Activated CD8-positive, alpha-beta T cell treated with anti-CD3 and anti-CD28 coated beads for 36 hours (primary cell): ENCODE measurements at regions of chr14 and their contacts with region 1.

Region 1: DNA sequence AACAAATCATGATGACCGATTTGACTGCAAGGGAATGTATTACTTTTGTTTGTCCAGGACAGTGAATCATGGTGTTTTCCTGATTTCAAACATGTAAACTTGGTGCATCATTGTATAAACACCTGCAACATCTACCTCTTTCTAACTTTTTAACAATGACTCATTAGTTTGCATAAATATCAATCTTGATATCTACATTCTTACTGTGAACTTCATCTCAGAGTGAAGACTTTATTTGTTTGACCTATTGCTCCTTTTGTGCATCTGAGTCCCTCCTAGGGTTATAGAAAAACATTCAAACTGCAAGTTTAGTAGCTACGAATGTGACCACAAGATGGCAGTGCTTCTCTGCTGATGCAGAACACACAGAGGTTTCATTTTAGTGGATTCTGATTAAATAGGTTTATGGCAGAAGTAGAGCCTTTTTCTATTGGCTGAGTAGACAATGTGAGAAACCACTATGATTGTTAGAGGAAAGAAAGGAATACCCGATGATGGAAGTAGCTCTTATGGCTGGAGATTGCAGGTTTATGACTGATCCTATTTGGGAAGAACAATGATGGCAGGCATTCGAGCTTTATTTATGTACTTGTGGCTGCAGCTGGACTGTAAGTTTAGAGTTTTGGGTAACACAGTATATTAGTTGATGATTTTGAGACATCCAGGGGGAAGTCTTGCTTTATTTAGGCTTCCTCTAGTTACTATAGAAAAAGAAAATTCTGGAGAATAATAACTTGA is 244.2 kb upstream of the OR4E1 start:
- DNase-seq: peak; percentile 81
- ATAC-seq: peak; percentile 58
- H3K4me3 Mint-ChIP-seq: peak overlapping the region; percentile 79
- H3K27ac Mint-ChIP-seq: peak overlapping the region; percentile 85
- H3K4me1 Mint-ChIP-seq: peaks cover 52% of the 10 kb centered on the region
- H3K27me3 Mint-ChIP-seq: no peaks in the 10 kb centered on the region
- CTCF ChIP-seq: peak; percentile 58

Region 2: GRCh38 chr14:21860172-21860571 is 57.7 kb before region 1 on chr14:
- CTCF ChIA-PET with region 1: interaction called, 11 read pairs
- POLR2A ChIA-PET with region 1: no interaction called
- intact Hi-C with region 1: no loop called
- DNase-seq: peak; percentile 65
- ATAC-seq: peak; percentile 35
- H3K4me3 Mint-ChIP-seq: peak overlapping the region; percentile 62
- H3K27ac Mint-ChIP-seq: peak overlapping the region; percentile 57
- H3K4me1 Mint-ChIP-seq: peaks cover 4% of the 10 kb centered on the region
- H3K27me3 Mint-ChIP-seq: peaks cover 5% of the 10 kb centered on the region
- CTCF ChIP-seq: peak; percentile 69

Region 3: GRCh38 chr14:21933681-21934080 is 15.8 kb after region 1 on chr14:
- CTCF ChIA-PET with region 1: interaction called, 39 read pairs
- POLR2A ChIA-PET with region 1: interaction called, 4 read pairs
- intact Hi-C with region 1: no loop called
- DNase-seq: no peak
- ATAC-seq: no peak
- H3K4me3 Mint-ChIP-seq: no peak overlapping the region
- H3K27ac Mint-ChIP-seq: no peak overlapping the region
- H3K4me1 Mint-ChIP-seq: peaks cover 9% of the 10 kb centered on the region
- H3K27me3 Mint-ChIP-seq: no peaks in the 10 kb centered on the region
- CTCF ChIP-seq: peak; percentile 26

Region 4: DNA sequence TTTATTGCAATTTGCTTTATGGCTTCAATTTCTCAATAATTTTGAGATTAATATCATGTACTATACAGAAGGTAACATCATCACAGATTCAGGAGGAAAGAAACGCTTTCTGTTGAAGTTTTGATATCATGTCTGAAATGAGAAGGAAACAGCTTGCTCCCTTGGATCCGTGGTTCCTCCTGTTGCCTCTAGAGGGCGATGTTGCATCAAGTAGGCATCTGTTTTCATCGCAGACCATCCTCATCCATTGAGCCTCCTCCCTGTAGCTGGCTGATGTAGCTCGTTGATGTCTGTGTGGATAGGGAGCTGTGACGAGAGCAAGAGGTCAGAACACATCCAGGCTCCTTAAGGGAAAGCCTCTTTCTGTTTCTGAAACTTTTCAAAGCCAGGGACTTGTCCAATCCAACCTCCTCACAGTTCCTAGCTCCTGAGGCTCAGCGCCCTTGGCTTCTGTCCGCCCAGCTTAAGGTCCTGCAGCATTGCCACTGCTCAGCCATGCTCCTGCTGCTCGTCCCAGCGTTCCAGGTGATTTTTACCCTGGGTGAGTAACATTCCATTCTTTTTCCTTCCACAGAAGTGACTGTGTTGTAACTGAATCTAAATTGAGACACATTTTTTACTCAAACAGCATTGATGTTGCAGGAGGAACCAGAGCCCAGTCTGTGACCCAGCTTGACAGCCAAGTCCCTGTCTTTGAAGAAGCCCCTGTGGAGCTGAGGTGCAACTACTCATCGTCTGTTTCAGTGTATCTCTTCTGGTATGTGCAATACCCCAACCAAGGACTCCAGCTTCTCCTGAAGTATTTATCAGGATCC is 60.5 kb after region 1 on chr14:
- CTCF ChIA-PET with region 1: interaction called, 33 read pairs
- POLR2A ChIA-PET with region 1: no interaction called
- intact Hi-C with region 1: loop called (anchors 5 kb)
- DNase-seq: peak; percentile 78
- ATAC-seq: peak; percentile 78
- H3K4me3 Mint-ChIP-seq: peak overlapping the region; percentile 78
- H3K27ac Mint-ChIP-seq: peak overlapping the region; percentile 63
- H3K4me1 Mint-ChIP-seq: peaks cover 21% of the 10 kb centered on the region
- H3K27me3 Mint-ChIP-seq: no peaks in the 10 kb centered on the region
- CTCF ChIP-seq: peak; percentile 67

Region 5: DNA sequence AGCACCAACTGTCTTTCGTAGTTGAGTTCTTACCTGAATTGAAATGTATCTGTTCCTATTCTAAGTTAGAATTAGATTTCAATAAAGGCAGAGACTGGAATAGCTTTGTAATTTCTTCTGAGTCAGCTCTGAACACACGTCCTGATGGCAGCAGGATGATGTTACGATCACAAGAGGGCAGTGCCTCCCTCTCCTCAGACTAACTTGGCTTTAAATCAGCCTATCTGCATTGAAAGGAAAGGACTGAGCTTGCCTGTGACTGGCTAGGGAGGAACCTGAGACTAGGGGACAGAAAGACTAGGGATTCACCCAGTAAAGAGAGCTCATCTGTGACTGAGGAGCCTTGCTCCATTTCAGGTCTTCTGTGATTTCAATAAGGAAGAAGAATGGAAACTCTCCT is 79.4 kb after region 1 on chr14:
- CTCF ChIA-PET with region 1: interaction called, 33 read pairs
- POLR2A ChIA-PET with region 1: no interaction called
- intact Hi-C with region 1: no loop called
- DNase-seq: peak; percentile 66
- ATAC-seq: peak; percentile 88
- H3K4me3 Mint-ChIP-seq: peak overlapping the region; percentile 95
- H3K27ac Mint-ChIP-seq: peak overlapping the region; percentile 96
- H3K4me1 Mint-ChIP-seq: peaks cover 20% of the 10 kb centered on the region
- H3K27me3 Mint-ChIP-seq: no peaks in the 10 kb centered on the region
- CTCF ChIP-seq: peak; percentile 33

Region 6: GRCh38 chr14:22099942-22100763 is 182.3 kb after region 1 on chr14:
- CTCF ChIA-PET with region 1: interaction called, 12 read pairs
- POLR2A ChIA-PET with region 1: no interaction called
- intact Hi-C with region 1: no loop called
- DNase-seq: peak; percentile 79
- ATAC-seq: peak; percentile 67
- H3K4me3 Mint-ChIP-seq: no peak overlapping the region
- H3K27ac Mint-ChIP-seq: peak overlapping the region; percentile 38
- H3K4me1 Mint-ChIP-seq: peaks cover 48% of the 10 kb centered on the region
- H3K27me3 Mint-ChIP-seq: no peaks in the 10 kb centered on the region
- CTCF ChIP-seq: peak; percentile 39

Region 7: DNA sequence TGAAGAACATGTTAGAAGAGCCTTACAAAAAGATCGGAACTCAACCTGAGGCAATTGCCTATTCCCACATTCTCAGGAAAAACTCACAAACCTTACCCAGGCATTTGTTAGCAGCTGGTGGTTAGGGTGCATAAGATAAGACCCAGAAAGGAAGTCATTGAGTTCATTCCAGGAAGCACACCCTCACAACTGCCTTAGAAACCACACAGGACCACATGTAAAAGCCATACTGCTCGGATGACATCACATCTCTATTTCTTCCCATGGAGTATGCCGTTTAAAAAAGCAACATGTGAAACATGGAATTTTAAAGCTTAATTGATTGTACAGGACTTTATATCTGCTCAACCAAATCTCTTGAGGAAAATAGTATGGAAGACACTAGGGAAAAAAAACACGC is 260.0 kb after region 1 on chr14:
- CTCF ChIA-PET with region 1: no interaction called
- POLR2A ChIA-PET with region 1: no interaction called
- intact Hi-C with region 1: no loop called
- DNase-seq: no peak
- ATAC-seq: peak; percentile 51
- H3K4me3 Mint-ChIP-seq: no peak overlapping the region
- H3K27ac Mint-ChIP-seq: no peak overlapping the region
- H3K4me1 Mint-ChIP-seq: peaks cover 14% of the 10 kb centered on the region
- H3K27me3 Mint-ChIP-seq: no peaks in the 10 kb centered on the region
- CTCF ChIP-seq: no peak